K562 (cell line): ENCODE measurements at regions of chr17 and their contacts with region 1.

Region 1: DNA sequence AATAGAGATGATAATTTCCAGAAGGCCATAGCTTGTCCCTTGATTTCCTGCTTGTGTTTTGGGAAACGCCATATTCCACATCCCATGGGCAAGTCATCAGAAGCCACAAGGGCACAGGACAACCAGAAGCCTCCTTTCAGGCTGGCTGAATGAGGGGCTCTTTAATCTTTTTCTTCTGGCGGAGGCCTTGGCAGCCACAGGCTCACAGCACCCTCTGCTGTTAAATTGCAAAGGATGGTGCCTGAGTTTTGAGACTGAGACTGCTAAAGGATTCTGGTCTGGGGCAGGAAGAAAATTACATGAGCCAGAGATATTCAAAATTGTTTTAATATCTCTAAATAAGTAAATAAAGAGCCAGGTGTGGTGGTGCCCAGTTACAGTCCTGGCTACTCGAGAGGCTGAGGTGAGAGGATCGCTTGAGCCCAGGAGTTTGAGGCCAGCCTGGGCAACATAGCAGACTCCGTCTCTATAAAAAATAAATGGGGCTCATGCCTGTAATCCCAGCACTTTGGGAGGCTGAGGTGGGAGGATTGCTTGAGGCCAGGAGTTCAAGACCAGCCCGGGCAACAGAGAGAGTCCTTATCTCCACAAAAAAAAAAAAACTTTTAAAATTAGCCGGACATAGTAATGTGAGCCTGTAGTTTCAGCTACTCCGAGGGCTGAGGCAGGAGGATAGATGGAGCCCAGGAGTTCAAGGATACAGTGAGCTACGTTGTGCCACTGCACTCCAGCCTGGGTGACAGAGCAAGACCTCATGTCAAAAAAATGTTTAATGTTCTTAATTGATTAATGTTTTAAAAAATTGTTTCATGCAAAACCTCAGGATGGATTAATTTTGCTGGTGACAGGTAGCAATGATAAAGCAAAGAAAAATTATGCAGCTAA is 26.3 kb downstream of the AARSD1 start:
- DNase-seq: peak; percentile 54 to 73 (median 60)
- ATAC-seq: peak; percentile 96
- H3K4me3 ChIP-seq: no peak overlapping the region
- H3K27ac ChIP-seq: no peak overlapping the region
- H3K4me1 ChIP-seq: no peaks in the 10 kb centered on the region
- H3K27me3 ChIP-seq: no peaks in the 10 kb centered on the region
- CTCF ChIP-seq: peak; percentile 79 to 91 (median 84)
- EP300 ChIP-seq: 0 out of 2 replicates have a peak, but pooled peaks have one; percentile 9
- POLR2A ChIP-seq: no peak
- RAD21 ChIP-seq: peak; percentile 78 to 91

Region 2: GRCh38 chr17:42720996-42721583 is 216.9 kb before region 1 on chr17:
- CTCF ChIA-PET with region 1: interaction called, 6 read pairs
- POLR2A ChIA-PET with region 1: no interaction called
- in situ Hi-C with region 1: loop called (anchors 10 kb)
- intact Hi-C with region 1: loop called (anchors 5 kb)
- DNase-seq: peak; percentile 60 to 81 (median 62)
- ATAC-seq: peak; percentile 90
- H3K4me3 ChIP-seq: no peak overlapping the region
- H3K27ac ChIP-seq: no peak overlapping the region
- H3K4me1 ChIP-seq: no peaks in the 10 kb centered on the region
- H3K27me3 ChIP-seq: no peaks in the 10 kb centered on the region
- CTCF ChIP-seq: peak; percentile 77 to 90 (median 81)
- EP300 ChIP-seq: peak; percentile 14; the same call in 1 of the 2 replicates
- POLR2A ChIP-seq: no peak
- RAD21 ChIP-seq: peak; percentile 88 to 96

Region 3: DNA sequence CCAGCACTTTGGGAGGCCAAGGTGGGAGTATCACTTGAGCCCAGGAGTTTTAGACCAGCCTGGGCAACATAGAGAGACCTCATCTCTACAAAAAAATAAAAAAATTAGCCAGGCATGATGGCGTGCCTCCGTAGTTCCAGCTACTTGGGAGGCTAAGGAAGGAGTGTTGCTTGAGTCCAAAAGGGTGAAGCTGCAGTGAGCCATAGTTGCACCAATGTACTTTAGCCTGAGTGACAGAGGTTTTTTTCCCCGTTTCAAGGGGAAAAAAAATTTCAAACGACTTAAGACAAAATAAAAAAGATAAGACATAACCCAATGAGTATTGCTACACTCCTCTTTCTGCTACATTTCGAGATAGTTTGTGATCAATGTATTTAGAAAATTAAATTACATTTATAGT is 552.7 kb after region 1 on chr17:
- CTCF ChIA-PET with region 1: no interaction called
- POLR2A ChIA-PET with region 1: no interaction called
- in situ Hi-C with region 1: no loop called
- intact Hi-C with region 1: no loop called
- DNase-seq: no peak
- ATAC-seq: no peak
- H3K4me3 ChIP-seq: no peak overlapping the region
- H3K27ac ChIP-seq: no peak overlapping the region
- H3K4me1 ChIP-seq: no peaks in the 10 kb centered on the region
- H3K27me3 ChIP-seq: no peaks in the 10 kb centered on the region
- CTCF ChIP-seq: no peak
- EP300 ChIP-seq: no peak
- POLR2A ChIP-seq: no peak
- RAD21 ChIP-seq: no peak